Thyroid gland (tissue), 4 donors: ENCODE measurements at regions of chr14 and their contacts with region 1.

Region 1: GRCh38 chr14:44912041-44912869 is 49.5 kb downstream of the KLHL28 start:
- DNase-seq: peak in 1 of 2 donors; percentile 10
- H3K4me3 ChIP-seq: peak overlapping the region in 2 of 3 donors; percentile 15 to 44
- H3K27ac ChIP-seq: no peak overlapping the region
- H3K4me1 ChIP-seq: peaks cover 3 to 14% of the 10 kb centered on the region in 2 donors
- H3K27me3 ChIP-seq: no peaks in the 10 kb centered on the region
- CTCF ChIP-seq: no peak
- POLR2A ChIP-seq: no peak

Region 2: GRCh38 chr14:44866322-44866721 is 45.9 kb before region 1 on chr14:
- intact Hi-C with region 1: no loop called
- DNase-seq: no peak
- H3K4me3 ChIP-seq: no peak overlapping the region
- H3K27ac ChIP-seq: no peak overlapping the region
- H3K4me1 ChIP-seq: no peaks in the 10 kb centered on the region
- H3K27me3 ChIP-seq: no peaks in the 10 kb centered on the region
- CTCF ChIP-seq: no peak
- POLR2A ChIP-seq: no peak

Region 3: GRCh38 chr14:45267071-45267470 is 354.8 kb after region 1 on chr14:
- intact Hi-C with region 1: loop called (anchors 5 kb)
- DNase-seq: no peak
- H3K4me3 ChIP-seq: no peak overlapping the region
- H3K27ac ChIP-seq: no peak overlapping the region
- H3K4me1 ChIP-seq: no peaks in the 10 kb centered on the region
- H3K27me3 ChIP-seq: no peaks in the 10 kb centered on the region
- CTCF ChIP-seq: no peak
- POLR2A ChIP-seq: no peak